SK-N-SH (cell line): ENCODE measurements at regions of chr1 and their contacts with region 1.

Region 1: DNA sequence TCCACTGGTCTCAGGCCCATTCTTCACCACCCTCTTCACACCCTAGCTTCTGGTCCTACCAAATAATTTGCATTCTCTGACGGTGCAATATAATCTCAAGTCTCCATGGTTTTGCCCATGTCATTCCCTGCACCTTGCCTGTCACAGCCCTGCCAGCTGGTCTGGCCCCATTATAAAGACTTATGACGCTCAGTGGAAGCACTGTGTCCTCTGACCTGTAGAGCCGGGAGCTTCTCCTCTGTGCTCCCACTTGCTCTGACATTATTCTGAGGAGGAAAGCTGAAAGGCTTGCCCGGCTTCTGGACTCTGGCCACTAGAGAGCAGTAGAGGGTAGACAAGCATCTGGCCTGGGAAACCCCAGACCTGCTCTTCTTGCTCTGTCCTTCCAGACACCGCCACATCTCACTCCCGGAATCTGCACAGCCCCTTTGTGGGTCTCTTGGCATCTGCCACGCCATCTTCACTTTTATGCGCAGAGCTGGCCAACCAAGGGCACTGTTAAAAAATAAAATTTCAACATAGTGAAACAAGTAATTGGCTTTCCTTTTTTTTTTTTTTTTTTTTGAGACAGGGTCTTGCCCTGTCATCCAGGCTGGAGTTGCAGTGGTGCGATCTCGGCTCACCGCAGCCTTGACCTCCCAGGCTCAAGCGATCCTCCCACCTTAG is 44.4 kb downstream of the NENF start:
- DNase-seq: peak; percentile 86
- H3K4me3 ChIP-seq: no peak overlapping the region; a peak in 1 of 4 replicates
- H3K27ac ChIP-seq: no peak overlapping the region
- H3K4me1 ChIP-seq: no peaks in the 10 kb centered on the region; a peak in 1 of 4 replicates
- H3K27me3 ChIP-seq: no peaks in the 10 kb centered on the region; the same call in 1 of the 2 replicates
- CTCF ChIP-seq: peak; percentile 90
- EP300 ChIP-seq: no peak
- RAD21 ChIP-seq: peak; percentile 96

Region 2: GRCh38 chr1:212450331-212450881 is 26.7 kb before region 1 on chr1:
- CTCF ChIA-PET with region 1: interaction called, 36 read pairs
- POLR2A ChIA-PET with region 1: no interaction called
- DNase-seq: peak; percentile 53
- H3K4me3 ChIP-seq: no peak overlapping the region
- H3K27ac ChIP-seq: peak overlapping the region in 1 of 2 experiments; percentile 70; a peak in 2 of 4 replicates
- H3K4me1 ChIP-seq: peaks cover 0 to 21% of the 10 kb centered on the region in 2 experiments; a peak in 1 of 4 replicates
- H3K27me3 ChIP-seq: no peaks in the 10 kb centered on the region
- CTCF ChIP-seq: no peak
- EP300 ChIP-seq: peak in 1 of 2 experiments; percentile 47; a peak in 1 of 4 replicates
- RAD21 ChIP-seq: no peak

Region 3: GRCh38 chr1:212498283-212499040 is 21.3 kb after region 1 on chr1:
- CTCF ChIA-PET with region 1: interaction called, 18 read pairs
- POLR2A ChIA-PET with region 1: no interaction called
- DNase-seq: no peak
- H3K4me3 ChIP-seq: no peak overlapping the region
- H3K27ac ChIP-seq: no peak overlapping the region
- H3K4me1 ChIP-seq: no peaks in the 10 kb centered on the region
- H3K27me3 ChIP-seq: no peaks in the 10 kb centered on the region
- CTCF ChIP-seq: no peak
- EP300 ChIP-seq: no peak
- RAD21 ChIP-seq: no peak

Region 4: DNA sequence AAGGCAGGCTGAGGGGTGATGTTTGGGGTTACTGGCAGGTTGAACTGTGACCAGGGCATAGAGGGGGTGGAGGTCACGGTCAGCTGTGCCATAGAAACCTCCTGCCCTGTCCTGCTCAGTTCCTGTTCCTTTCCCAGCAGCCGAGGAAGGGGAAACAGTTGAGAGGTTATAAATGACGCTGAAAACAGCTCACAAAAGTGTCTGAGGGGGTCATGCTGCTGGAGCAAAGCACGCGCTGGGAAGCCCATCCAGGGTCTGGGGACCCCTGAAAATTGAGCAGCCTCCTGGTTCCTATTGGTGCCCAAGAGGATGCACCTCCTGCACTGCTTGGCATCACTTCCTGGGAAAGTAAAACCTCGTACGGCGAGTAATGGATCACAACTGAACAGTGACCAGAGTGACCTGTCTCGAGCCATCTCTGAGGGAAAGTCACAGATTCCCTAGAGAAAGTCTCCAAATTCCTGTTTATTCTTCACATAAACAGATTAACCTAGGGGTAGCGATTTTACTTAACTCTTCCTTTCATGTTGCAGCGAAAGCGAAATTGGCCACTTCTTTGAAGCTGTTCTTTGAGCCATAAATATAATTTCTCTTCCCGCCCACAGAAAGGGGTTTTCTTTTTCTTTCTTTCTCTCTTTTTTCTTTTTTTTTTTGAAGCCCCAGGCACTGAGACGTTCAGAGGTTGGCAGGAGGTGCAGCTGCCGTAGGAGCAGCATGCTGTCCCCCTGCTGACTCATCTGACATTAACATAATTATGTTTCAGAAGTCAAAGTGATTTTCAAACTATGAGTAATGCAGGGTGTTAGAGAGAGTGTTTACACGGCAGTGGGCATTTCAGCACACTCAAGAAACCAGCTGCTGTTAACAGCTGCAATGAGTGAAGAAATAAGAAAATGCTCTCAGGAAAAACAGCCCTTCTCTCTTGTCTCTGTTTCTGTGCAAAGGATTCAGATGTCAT is 89.7 kb after region 1 on chr1:
- CTCF ChIA-PET with region 1: interaction called, 13 read pairs
- POLR2A ChIA-PET with region 1: no interaction called
- DNase-seq: peak; percentile 71
- H3K4me3 ChIP-seq: peak overlapping the region; percentile 46 to 59
- H3K27ac ChIP-seq: peak overlapping the region in 1 of 2 experiments; percentile 75; a peak in 2 of 4 replicates
- H3K4me1 ChIP-seq: peaks cover 6 to 14% of the 10 kb centered on the region in 2 experiments; a peak in 3 of 4 replicates
- H3K27me3 ChIP-seq: no peaks in the 10 kb centered on the region
- CTCF ChIP-seq: no peak
- EP300 ChIP-seq: no peak
- RAD21 ChIP-seq: no peak

Region 5: GRCh38 chr1:212630158-212630900 is 153.2 kb after region 1 on chr1:
- CTCF ChIA-PET with region 1: interaction called, 23 read pairs
- POLR2A ChIA-PET with region 1: no interaction called
- DNase-seq: peak; percentile 75
- H3K4me3 ChIP-seq: no peak overlapping the region; a peak in 1 of 4 replicates
- H3K27ac ChIP-seq: no peak overlapping the region
- H3K4me1 ChIP-seq: peaks cover 0 to 20% of the 10 kb centered on the region in 2 experiments; a peak in 2 of 4 replicates
- H3K27me3 ChIP-seq: peaks cover 55% of the 10 kb centered on the region
- CTCF ChIP-seq: peak; percentile 70
- EP300 ChIP-seq: no peak
- RAD21 ChIP-seq: peak; percentile 62

Region 6: GRCh38 chr1:212743901-212744475 is 266.8 kb after region 1 on chr1:
- CTCF ChIA-PET with region 1: interaction called, 14 read pairs
- POLR2A ChIA-PET with region 1: no interaction called
- DNase-seq: no peak
- H3K4me3 ChIP-seq: no peak overlapping the region
- H3K27ac ChIP-seq: no peak overlapping the region
- H3K4me1 ChIP-seq: no peaks in the 10 kb centered on the region; a peak in 1 of 4 replicates
- H3K27me3 ChIP-seq: no peaks in the 10 kb centered on the region
- CTCF ChIP-seq: no peak
- EP300 ChIP-seq: no peak
- RAD21 ChIP-seq: no peak

Region 7: GRCh38 chr1:212994926-212995325 is 517.8 kb after region 1 on chr1:
- CTCF ChIA-PET with region 1: interaction called, 16 read pairs
- POLR2A ChIA-PET with region 1: no interaction called
- DNase-seq: no peak
- H3K4me3 ChIP-seq: no peak overlapping the region
- H3K27ac ChIP-seq: no peak overlapping the region
- H3K4me1 ChIP-seq: no peaks in the 10 kb centered on the region; a peak in 1 of 4 replicates
- H3K27me3 ChIP-seq: no peaks in the 10 kb centered on the region
- CTCF ChIP-seq: no peak
- EP300 ChIP-seq: no peak
- RAD21 ChIP-seq: no peak